Activated B cell treated with CpG ODN at 0.5 μM for 24 hours (primary cell): ENCODE measurements at regions of chr1 and their contacts with region 1.

Region 1: DNA sequence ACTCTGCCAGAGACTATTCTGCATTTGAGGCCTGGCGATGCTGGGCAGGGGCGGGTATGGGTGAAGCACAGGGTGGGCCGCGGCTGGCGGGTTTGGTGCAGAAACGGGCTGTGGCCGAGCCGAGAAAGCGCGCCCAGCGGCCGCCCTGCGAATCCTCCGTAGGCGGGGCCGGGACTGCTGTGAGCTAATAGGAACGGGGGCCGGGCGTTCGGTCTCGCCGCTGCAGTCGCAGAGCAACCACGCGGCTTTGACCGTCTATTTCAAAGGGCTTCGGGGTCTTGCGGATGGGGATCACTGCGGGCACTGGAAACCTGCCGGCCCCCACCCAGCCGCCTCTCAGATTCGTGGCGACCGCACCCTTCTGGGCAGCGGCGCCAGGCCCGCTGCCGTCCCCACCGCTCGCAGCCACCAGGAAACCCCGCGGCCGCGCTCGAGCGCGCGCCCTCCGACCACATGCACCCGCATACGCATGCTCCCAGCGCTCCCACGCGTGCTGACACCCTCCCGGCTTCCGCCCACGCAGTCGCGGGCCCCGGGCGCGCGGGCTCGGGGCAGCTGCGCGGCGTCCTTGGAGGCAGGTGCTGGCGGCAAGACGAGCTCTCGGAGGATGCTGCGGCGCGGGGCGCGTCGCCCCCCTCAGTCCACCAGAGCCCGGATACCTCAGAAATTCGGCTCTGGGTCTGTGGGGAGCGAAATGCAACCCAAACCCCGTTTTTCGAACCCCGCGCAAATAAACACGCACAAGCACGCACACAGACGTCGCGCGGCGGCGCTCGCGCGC is 32.6 kb downstream of the DNTTIP2 start:
- DNase-seq: peak; percentile 85
- ATAC-seq: peak; percentile 56
- H3K4me3 Mint-ChIP-seq: peak overlapping the region; percentile 93
- H3K27ac Mint-ChIP-seq: peak overlapping the region; percentile 96
- H3K4me1 Mint-ChIP-seq: peaks cover 24% of the 10 kb centered on the region
- H3K27me3 Mint-ChIP-seq: peaks cover 2% of the 10 kb centered on the region
- CTCF ChIP-seq: no peak

Region 2: GRCh38 chr1:92975551-92976232 is 870.7 kb before region 1 on chr1:
- CTCF ChIA-PET with region 1: no interaction called
- POLR2A ChIA-PET with region 1: no interaction called
- intact Hi-C with region 1: loop called (anchors 5 kb)
- DNase-seq: peak; percentile 48
- ATAC-seq: peak; percentile 73
- H3K4me3 Mint-ChIP-seq: peak overlapping the region; percentile 67
- H3K27ac Mint-ChIP-seq: peak overlapping the region; percentile 99
- H3K4me1 Mint-ChIP-seq: peaks cover 91% of the 10 kb centered on the region
- H3K27me3 Mint-ChIP-seq: no peaks in the 10 kb centered on the region
- CTCF ChIP-seq: no peak

Region 3: DNA sequence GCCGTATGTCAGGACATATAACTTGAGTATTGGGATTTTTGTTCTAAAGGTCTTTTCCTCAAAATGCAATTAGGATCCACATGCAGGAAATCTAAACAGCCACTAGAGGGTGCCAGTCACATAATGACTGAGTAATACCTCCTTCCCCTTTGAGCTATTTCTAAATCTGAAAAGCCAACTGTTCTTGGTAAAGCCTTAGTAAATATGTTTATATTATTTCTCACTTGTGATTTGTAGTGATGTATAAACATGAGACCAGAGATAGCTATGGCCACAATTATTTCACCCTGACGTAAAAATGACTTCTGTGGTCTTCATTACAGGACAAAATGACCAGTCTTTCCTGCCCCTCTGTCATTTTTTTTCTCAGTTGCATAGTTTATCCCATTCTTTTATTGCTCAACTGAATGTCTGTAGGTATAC is 541.7 kb before region 1 on chr1:
- CTCF ChIA-PET with region 1: interaction called, 18 read pairs
- POLR2A ChIA-PET with region 1: no interaction called
- intact Hi-C with region 1: loop called (anchors 1 kb)
- DNase-seq: no peak
- ATAC-seq: peak; percentile 71
- H3K4me3 Mint-ChIP-seq: no peak overlapping the region
- H3K27ac Mint-ChIP-seq: no peak overlapping the region
- H3K4me1 Mint-ChIP-seq: no peaks in the 10 kb centered on the region
- H3K27me3 Mint-ChIP-seq: no peaks in the 10 kb centered on the region
- CTCF ChIP-seq: peak; percentile 87

Region 4: GRCh38 chr1:93629099-93630059 is 217.0 kb before region 1 on chr1:
- CTCF ChIA-PET with region 1: interaction called, 83 read pairs
- POLR2A ChIA-PET with region 1: interaction called, 24 read pairs
- intact Hi-C with region 1: loop called (anchors 1 kb)
- DNase-seq: no peak
- ATAC-seq: peak; percentile 83
- H3K4me3 Mint-ChIP-seq: no peak overlapping the region
- H3K27ac Mint-ChIP-seq: no peak overlapping the region
- H3K4me1 Mint-ChIP-seq: peaks cover 9% of the 10 kb centered on the region
- H3K27me3 Mint-ChIP-seq: no peaks in the 10 kb centered on the region
- CTCF ChIP-seq: peak; percentile 74

Region 5: GRCh38 chr1:93801471-93801870 is 44.9 kb before region 1 on chr1:
- CTCF ChIA-PET with region 1: no interaction called
- POLR2A ChIA-PET with region 1: no interaction called
- intact Hi-C with region 1: no loop called
- DNase-seq: no peak
- ATAC-seq: no peak
- H3K4me3 Mint-ChIP-seq: no peak overlapping the region
- H3K27ac Mint-ChIP-seq: no peak overlapping the region
- H3K4me1 Mint-ChIP-seq: no peaks in the 10 kb centered on the region
- H3K27me3 Mint-ChIP-seq: no peaks in the 10 kb centered on the region
- CTCF ChIP-seq: no peak

Region 6: DNA sequence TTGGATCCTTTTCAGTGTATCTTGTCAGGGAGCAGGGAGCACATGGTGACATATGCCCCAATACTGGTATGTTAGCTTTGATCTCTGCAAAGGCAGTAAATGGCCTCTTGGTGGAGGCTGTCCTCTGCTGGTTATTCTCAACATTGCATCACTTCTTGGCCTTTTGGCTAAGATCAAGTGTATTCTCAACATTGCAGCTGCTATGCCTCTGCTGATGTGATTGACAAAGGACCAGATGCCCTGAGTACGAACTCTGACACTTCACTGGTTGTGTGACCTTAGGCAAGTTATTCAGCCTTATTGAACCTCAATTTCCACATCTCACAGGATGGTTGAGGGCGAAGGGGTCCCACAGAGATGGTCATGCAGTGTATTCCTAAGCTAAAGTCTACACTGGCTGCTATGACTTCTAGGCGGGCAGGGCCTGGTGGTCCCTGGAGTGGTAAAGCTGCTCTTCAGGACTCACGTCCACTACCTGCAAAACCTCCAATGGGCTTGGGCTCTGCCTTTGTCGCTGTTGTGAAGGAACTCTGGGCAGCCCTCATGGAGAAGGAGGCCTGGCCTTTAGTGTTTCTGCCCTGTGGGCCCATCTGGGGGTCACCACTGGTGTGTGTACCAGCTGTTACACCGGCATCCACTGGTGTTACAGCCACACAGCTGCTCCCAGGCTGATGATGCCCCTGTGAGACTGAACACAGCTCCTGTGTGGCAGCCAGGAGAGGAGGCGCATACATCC is 32.2 kb before region 1 on chr1:
- CTCF ChIA-PET with region 1: interaction called, 76 read pairs
- POLR2A ChIA-PET with region 1: interaction called, 7 read pairs
- intact Hi-C with region 1: loop called (anchors 1 kb)
- DNase-seq: no peak
- ATAC-seq: peak; percentile 97
- H3K4me3 Mint-ChIP-seq: no peak overlapping the region
- H3K27ac Mint-ChIP-seq: no peak overlapping the region
- H3K4me1 Mint-ChIP-seq: peaks cover 16% of the 10 kb centered on the region
- H3K27me3 Mint-ChIP-seq: no peaks in the 10 kb centered on the region
- CTCF ChIP-seq: peak; percentile 55

Region 7: GRCh38 chr1:94926915-94927404 is 1080.6 kb after region 1 on chr1 and contains the start of gene CNN3:
- CTCF ChIA-PET with region 1: no interaction called
- POLR2A ChIA-PET with region 1: no interaction called
- intact Hi-C with region 1: loop called (anchors 5 kb)
- DNase-seq: peak; percentile 74
- ATAC-seq: peak; percentile 87
- H3K4me3 Mint-ChIP-seq: peak within 1 kb of the TSS; percentile 86
- H3K27ac Mint-ChIP-seq: peak within 1 kb of the TSS; percentile 86
- H3K4me1 Mint-ChIP-seq: peaks cover 30% of the 10 kb centered on the region
- H3K27me3 Mint-ChIP-seq: peaks cover 15% of the 10 kb centered on the region
- CTCF ChIP-seq: no peak
- total RNA-seq, gene CNN3: 6.2 and 11.8 TPM in 2 replicates